Activated CD4-positive, alpha-beta T cell treated with anti-CD3 and anti-CD28 coated beads, Interleukin-2, amount 10 ng/mL, durations not matched to agents 24 days and 14 days (primary cell): ENCODE measurements at regions of chrX and their contacts with region 1.

Region 1: DNA sequence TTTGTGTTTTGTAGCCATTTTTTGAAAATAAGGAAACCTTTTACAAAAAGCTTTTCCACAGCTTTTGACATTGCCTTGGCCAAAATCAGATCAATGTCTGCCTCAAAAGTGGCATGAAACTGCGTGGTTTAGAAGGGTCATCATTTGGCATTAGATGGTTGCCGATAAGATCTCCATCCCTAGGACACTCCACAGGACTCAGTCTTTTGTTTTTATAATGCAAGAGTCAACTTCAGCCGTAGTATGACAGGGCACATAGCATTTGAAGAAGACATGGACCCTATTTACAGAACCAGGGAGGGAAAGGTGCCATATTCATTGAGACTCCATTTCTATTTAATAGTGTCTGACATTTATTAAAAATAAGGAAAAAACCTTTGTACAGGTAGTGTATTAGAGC is 1.3 kb downstream of the RTL8A start:
- DNase-seq: no peak
- H3K4me3 Mint-ChIP-seq: peak overlapping the region; percentile 91
- H3K27ac Mint-ChIP-seq: peak overlapping the region; percentile 79
- H3K4me1 Mint-ChIP-seq: peaks cover 17% of the 10 kb centered on the region
- H3K27me3 Mint-ChIP-seq: no peaks in the 10 kb centered on the region

Region 2: GRCh38 chrX:134619838-134620237 is 430.8 kb before region 1 on chrX:
- intact Hi-C with region 1: no loop called
- DNase-seq: no peak
- H3K4me3 Mint-ChIP-seq: no peak overlapping the region
- H3K27ac Mint-ChIP-seq: no peak overlapping the region
- H3K4me1 Mint-ChIP-seq: peaks cover 11% of the 10 kb centered on the region
- H3K27me3 Mint-ChIP-seq: peaks cover 2% of the 10 kb centered on the region

Region 3: DNA sequence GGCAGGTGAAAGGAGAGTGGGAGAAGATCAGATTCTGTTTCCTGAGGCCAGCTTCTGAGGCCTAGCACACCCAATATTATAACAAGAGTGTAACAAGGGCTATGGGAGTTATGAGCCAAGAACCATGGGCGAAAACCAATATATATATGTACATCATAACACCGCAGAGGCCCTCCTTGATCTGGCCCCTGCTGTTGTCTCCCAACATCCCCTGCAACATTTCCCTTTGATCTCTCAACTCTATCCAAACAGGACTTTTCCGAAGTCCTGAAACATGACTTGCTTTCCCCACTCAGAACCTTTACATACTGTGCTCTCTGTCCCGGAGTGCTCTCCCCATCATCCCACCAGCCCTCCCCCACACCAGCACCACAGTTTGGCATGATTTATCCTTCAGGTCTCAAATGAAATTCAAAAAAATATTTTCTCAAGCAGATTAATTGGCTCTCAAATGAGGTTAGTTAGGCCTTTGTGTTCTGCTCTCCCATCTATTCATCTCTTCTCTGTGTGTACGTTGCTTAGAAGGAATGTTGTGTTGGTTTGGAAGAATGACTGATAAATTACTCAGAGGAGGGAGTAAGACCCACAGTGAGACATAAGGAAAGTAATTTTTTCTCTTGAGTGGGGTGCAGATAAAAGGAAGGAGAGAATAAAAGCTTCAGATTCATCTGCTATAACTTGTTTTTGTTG is 117.9 kb before region 1 on chrX:
- intact Hi-C with region 1: no loop called
- DNase-seq: no peak
- H3K4me3 Mint-ChIP-seq: no peak overlapping the region
- H3K27ac Mint-ChIP-seq: no peak overlapping the region
- H3K4me1 Mint-ChIP-seq: peaks cover 4% of the 10 kb centered on the region
- H3K27me3 Mint-ChIP-seq: peaks cover 3% of the 10 kb centered on the region

Region 4: DNA sequence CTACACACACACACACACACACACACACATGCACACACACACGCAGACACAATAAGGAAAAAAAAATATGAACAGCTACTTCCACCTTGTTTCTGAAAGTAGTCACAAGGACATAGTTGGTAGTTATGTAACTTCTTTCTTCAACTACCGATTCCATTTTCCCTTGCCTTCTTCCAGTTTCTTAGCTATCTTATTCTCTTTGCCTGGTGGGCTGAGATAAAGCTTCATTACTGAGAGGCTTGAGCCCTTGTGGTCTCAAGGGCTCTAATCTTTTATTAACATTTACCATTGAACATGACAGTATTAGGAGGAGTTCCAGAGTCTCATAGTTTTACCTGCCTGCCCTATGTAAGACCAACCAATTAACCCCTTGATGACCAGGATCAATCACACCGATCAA is 68.7 kb before region 1 on chrX:
- intact Hi-C with region 1: no loop called
- DNase-seq: no peak
- H3K4me3 Mint-ChIP-seq: no peak overlapping the region
- H3K27ac Mint-ChIP-seq: no peak overlapping the region
- H3K4me1 Mint-ChIP-seq: no peaks in the 10 kb centered on the region
- H3K27me3 Mint-ChIP-seq: peaks cover 12% of the 10 kb centered on the region

Region 5: GRCh38 chrX:135015523-135016245 is 34.9 kb before region 1 on chrX:
- intact Hi-C with region 1: loop called (anchors 2 kb)
- DNase-seq: no peak
- H3K4me3 Mint-ChIP-seq: no peak overlapping the region
- H3K27ac Mint-ChIP-seq: no peak overlapping the region
- H3K4me1 Mint-ChIP-seq: no peaks in the 10 kb centered on the region
- H3K27me3 Mint-ChIP-seq: peaks cover 15% of the 10 kb centered on the region

Region 6: GRCh38 chrX:135086197-135086854 is 35.7 kb after region 1 on chrX:
- intact Hi-C with region 1: loop called (anchors 2 kb)
- DNase-seq: peak; percentile 86
- H3K4me3 Mint-ChIP-seq: no peak overlapping the region
- H3K27ac Mint-ChIP-seq: no peak overlapping the region
- H3K4me1 Mint-ChIP-seq: peaks cover 6% of the 10 kb centered on the region
- H3K27me3 Mint-ChIP-seq: peaks cover 4% of the 10 kb centered on the region

Region 7: DNA sequence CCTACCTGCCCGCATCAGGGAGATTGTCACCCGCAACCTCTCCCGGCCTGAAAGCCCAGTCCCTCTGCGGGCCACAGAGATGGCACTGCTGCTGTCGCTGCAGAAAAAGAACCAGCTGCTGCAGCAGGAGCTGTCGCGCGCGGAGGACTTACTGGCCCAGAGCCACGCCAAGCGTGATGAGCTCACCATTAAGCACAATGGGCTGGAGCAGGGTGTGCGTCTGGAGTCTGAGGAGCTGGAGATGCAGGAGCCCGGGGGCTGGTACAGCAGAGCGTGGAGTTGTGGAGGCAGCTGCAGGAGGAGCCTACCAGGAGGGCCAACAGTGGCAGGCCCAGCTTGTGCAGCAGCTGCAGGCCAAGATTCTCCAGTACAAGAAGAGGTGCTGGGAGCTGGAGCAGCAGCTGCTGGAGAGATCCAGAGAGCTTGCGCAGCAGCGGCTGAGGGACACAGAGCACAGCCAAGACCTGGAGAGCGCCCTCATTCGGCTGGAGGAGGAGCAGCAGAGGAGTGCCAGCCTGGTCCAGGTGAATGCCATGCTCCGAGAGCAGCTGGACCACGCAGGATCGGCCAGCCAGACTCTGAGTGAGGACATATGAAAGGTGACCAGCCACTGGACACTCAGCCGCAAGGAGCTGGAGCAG is 382.4 kb after region 1 on chrX:
- intact Hi-C with region 1: no loop called
- DNase-seq: no peak
- H3K4me3 Mint-ChIP-seq: no peak overlapping the region
- H3K27ac Mint-ChIP-seq: no peak overlapping the region
- H3K4me1 Mint-ChIP-seq: peaks cover 10% of the 10 kb centered on the region
- H3K27me3 Mint-ChIP-seq: peaks cover 6% of the 10 kb centered on the region